Activated CD4-positive, alpha-beta T cell treated with anti-CD3 and anti-CD28 coated beads, Interleukin-2, amount 10 ng/mL, durations not matched to agents 24 days and 14 days (primary cell): ENCODE measurements at regions of chr3 and their contacts with region 1.

Region 1: GRCh38 chr3:40961104-40961857 is 238.0 kb upstream of the CTNNB1 start:
- DNase-seq: no peak
- H3K4me3 Mint-ChIP-seq: no peak overlapping the region
- H3K27ac Mint-ChIP-seq: peak overlapping the region; percentile 52
- H3K4me1 Mint-ChIP-seq: peaks cover 8% of the 10 kb centered on the region
- H3K27me3 Mint-ChIP-seq: no peaks in the 10 kb centered on the region

Region 2: GRCh38 chr3:40971191-40972168 is 10.2 kb after region 1 on chr3:
- intact Hi-C with region 1: loop called (anchors 1 kb)
- DNase-seq: peak; percentile 77
- H3K4me3 Mint-ChIP-seq: peak overlapping the region; percentile 77
- H3K27ac Mint-ChIP-seq: peak overlapping the region; percentile 98
- H3K4me1 Mint-ChIP-seq: peaks cover 53% of the 10 kb centered on the region
- H3K27me3 Mint-ChIP-seq: no peaks in the 10 kb centered on the region

Region 3: DNA sequence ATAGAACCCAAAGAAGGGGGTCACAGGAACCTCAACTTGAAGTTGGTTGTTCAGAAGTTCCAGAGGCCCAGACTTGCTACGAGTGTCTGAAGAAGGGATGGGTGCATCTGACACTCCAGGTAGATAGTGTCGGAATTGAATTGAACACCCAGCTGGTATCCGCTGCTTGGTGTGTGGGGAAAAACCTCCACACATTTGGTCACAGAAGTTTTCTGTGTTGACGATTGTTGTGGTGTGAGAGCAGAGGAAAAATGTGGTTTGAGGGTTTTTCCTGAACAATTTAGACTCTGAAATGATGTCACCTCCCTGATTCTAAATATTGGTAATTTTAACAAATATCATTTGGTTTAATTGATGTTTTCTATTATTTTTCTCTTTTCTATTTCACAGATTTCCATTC is 19.2 kb after region 1 on chr3:
- intact Hi-C with region 1: loop called (anchors 1 kb)
- DNase-seq: peak; percentile 73
- H3K4me3 Mint-ChIP-seq: peak overlapping the region; percentile 38
- H3K27ac Mint-ChIP-seq: peak overlapping the region; percentile 69
- H3K4me1 Mint-ChIP-seq: peaks cover 25% of the 10 kb centered on the region
- H3K27me3 Mint-ChIP-seq: peaks cover 33% of the 10 kb centered on the region

Region 4: DNA sequence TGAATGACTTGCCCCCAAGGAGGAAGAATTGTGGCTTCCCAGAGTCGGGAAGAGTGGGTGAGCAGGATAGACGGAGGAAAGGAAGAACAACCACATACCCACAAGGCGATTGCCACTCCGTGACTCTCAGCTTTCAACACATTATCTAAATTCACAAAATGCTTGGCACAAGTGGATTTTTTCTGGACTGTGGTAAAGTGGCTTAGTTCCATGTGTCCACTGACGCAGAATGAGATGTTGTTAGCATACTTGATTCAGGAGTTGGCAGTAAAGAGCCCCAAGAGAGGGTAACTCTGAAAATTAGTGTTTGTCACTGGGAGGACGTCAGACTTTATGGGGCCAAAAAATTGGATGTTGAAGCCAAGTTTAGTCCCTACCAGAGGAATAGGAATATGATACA is 39.2 kb after region 1 on chr3:
- intact Hi-C with region 1: no loop called
- DNase-seq: no peak
- H3K4me3 Mint-ChIP-seq: no peak overlapping the region
- H3K27ac Mint-ChIP-seq: no peak overlapping the region
- H3K4me1 Mint-ChIP-seq: no peaks in the 10 kb centered on the region
- H3K27me3 Mint-ChIP-seq: peaks cover 8% of the 10 kb centered on the region